ENCODE measurements at regions of chr2 and their contacts with region 1.

Region 1: GRCh38 chr2:64914735-64915509 is 74.3 kb upstream of the SLC1A4 start:
- DNase-seq: no peak
- ATAC-seq: peak; percentile 73
- H3K4me3 Mint-ChIP-seq: peak overlapping the region; percentile 71
- H3K27ac Mint-ChIP-seq: peak overlapping the region; percentile 94
- H3K4me1 Mint-ChIP-seq: peaks cover 68% of the 10 kb centered on the region
- H3K27me3 Mint-ChIP-seq: no peaks in the 10 kb centered on the region
- CTCF ChIP-seq: no peak

Region 2: DNA sequence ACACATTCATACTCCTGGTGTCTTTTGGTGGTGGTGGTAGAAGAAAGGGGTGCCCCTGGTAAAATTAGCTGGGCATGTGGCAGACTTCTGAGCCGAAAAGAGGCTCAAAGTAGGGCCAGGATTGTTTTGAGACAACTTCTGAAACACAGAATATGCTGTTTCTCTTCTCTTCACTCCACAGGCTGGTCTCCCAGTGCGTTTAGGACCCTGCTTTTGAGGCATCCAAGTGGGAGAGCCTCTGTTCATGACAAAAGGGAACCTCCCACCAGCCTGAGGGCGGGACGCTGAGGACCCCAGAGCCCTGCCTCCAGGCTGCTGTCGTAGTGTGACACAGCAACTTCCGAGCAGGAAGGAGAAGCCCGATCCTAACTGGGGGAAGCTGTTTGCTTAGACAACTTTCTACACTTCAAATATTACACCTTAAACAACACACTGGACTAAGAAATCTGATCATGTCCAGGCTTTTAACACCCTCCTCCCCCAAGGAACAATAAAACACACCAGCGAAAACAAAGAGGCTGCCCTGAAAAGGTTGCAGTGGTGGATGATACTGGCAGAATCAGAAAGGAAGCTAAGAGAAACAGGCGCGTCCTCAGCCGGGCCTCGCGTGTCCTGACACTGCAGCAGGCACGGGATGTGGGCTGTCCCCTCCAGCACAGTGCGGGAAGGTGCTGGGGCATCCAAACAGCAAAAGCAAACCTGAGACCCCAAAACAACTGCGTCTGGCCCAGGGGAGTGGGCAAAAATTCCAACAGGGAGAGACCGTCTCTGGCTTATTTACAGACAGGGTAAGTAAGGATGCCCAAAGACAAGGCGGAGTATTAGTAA is 270.5 kb before region 1 on chr2:
- CTCF ChIA-PET with region 1: interaction called, 4 read pairs
- POLR2A ChIA-PET with region 1: interaction called, 7 read pairs
- intact Hi-C with region 1: loop called (anchors 1 kb)
- DNase-seq: peak; percentile 48
- ATAC-seq: peak; percentile 45
- H3K4me3 Mint-ChIP-seq: peak overlapping the region; percentile 86
- H3K27ac Mint-ChIP-seq: peak overlapping the region; percentile 93
- H3K4me1 Mint-ChIP-seq: peaks cover 96% of the 10 kb centered on the region
- H3K27me3 Mint-ChIP-seq: no peaks in the 10 kb centered on the region
- CTCF ChIP-seq: no peak

Region 3: DNA sequence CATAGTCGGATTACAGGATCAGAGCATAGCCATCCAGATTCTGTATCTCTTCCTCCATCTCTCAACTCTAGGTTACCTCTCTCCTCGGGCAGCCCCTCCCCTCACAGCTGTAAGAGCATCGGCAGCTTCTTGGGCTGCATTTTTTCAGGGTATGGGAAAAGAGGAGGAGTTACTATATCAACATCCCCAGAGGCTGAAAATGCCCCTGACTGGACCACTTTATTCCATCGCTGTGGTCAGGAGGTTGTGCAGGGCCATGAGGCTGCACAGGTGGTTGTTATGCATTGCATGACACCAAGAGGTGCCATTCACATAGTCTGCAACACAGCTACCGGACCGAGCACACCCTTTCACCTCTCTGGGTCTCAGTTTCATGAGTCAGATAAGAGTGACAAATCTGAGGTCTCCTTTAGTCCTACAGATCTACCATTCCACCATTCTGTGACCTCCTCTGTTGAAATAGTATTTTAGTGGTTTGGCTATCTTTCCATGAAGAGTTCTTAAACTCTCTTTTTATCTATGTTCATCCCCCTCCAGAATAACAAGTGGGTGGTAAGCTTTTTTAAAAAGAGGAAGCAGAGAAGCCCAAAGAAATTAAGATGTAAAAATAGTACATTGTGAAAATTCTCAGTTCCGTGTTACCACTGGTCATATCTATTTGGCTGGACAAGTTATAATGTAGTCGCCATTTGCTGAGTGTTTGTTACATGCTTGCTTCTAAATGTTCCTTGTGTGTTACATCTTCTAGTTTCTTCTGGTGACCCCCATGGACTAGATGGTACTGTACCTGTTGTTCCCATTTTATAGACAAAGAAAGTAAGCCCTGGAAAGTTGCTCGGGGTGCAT is 17.7 kb after region 1 on chr2:
- CTCF ChIA-PET with region 1: interaction called, 45 read pairs
- POLR2A ChIA-PET with region 1: interaction called, 50 read pairs
- intact Hi-C with region 1: loop called (anchors 1 kb)
- DNase-seq: no peak
- ATAC-seq: peak; percentile 81
- H3K4me3 Mint-ChIP-seq: peak overlapping the region; percentile 90
- H3K27ac Mint-ChIP-seq: peak overlapping the region; percentile 93
- H3K4me1 Mint-ChIP-seq: peaks cover 97% of the 10 kb centered on the region
- H3K27me3 Mint-ChIP-seq: no peaks in the 10 kb centered on the region
- CTCF ChIP-seq: no peak

Region 4: DNA sequence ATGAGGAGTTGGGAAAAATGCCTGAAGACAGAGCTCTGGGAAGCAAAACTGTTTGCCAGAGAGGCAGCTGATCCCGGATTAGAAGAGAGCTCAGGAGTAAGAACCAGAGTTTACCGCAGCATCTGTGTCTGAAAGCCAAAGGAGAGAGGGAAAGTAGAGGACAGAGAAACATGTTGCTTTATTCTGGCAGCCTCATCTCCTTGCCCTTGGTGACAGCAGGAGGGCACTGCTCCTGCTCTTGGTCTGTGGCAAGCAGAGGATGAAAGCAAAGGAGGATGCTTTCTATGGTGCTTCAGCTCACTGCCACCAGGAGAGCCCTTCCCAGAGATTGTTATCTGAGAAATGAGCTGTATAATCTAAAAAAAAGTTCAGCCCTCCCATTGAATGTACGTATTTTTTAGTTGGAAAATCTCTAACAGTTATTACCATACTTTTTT is 82.0 kb after region 1 on chr2:
- CTCF ChIA-PET with region 1: interaction called, 14 read pairs
- POLR2A ChIA-PET with region 1: interaction called, 102 read pairs
- intact Hi-C with region 1: no loop called
- DNase-seq: no peak
- ATAC-seq: no peak
- H3K4me3 Mint-ChIP-seq: no peak overlapping the region
- H3K27ac Mint-ChIP-seq: no peak overlapping the region
- H3K4me1 Mint-ChIP-seq: peaks cover 6% of the 10 kb centered on the region
- H3K27me3 Mint-ChIP-seq: no peaks in the 10 kb centered on the region
- CTCF ChIP-seq: no peak

Region 5: GRCh38 chr2:65040400-65041261 is 125.7 kb after region 1 on chr2:
- CTCF ChIA-PET with region 1: interaction called, 186 read pairs
- POLR2A ChIA-PET with region 1: interaction called, 5 read pairs
- intact Hi-C with region 1: loop called (anchors 1 kb)
- DNase-seq: peak; percentile 59
- ATAC-seq: peak; percentile 99
- H3K4me3 Mint-ChIP-seq: no peak overlapping the region
- H3K27ac Mint-ChIP-seq: peak overlapping the region; percentile 20
- H3K4me1 Mint-ChIP-seq: peaks cover 11% of the 10 kb centered on the region
- H3K27me3 Mint-ChIP-seq: no peaks in the 10 kb centered on the region
- CTCF ChIP-seq: peak; percentile 55

Region 6: DNA sequence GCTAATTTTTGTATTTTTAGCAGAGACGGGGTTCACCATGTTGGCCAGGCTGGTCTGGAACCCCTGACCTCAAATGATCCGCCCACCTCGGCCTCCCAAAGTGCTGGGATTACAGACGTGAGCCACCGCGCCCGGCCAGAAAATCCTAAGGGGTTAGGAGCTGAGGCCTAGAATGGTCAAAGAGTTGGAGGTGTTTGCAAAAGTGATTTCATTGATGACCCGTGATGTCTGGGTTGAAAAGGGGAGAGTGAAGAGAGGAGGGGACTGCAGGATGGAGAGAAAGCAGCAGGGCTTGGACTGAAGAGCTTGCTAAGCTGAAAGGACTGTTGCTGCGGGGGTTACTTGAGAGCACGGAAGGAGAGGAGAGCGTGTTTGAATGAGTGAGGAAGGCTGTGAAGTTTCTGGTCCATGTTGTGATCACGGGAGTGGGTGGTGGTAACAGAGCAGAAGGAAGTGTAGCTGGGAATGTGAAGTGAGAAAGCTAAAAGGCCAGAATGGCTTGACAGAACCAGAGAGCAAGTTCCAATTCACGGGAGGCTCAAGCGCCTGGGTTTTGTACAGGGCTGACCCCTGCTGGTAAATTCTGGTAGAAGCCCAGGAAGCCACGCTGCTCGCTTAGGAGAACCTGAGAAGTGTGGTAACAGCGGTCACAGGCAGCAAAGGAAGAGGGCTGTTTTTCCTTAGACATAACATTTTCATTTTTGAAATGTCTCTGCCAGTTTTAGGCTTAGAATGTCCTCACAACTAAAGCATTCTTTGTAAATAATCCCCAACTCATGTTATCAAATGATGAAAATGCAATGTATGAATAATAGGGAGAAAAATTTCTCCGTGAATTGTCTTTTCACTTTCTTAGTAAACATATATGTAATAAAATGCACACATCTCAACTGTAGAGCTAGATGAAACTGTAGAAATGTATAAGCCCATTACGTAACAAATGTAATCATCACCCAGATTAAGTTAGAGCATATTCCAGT is 272.2 kb after region 1 on chr2:
- CTCF ChIA-PET with region 1: interaction called, 3 read pairs
- POLR2A ChIA-PET with region 1: no interaction called
- intact Hi-C with region 1: loop called (anchors 5 kb)
- DNase-seq: peak; percentile 38
- ATAC-seq: peak; percentile 91
- H3K4me3 Mint-ChIP-seq: no peak overlapping the region
- H3K27ac Mint-ChIP-seq: no peak overlapping the region
- H3K4me1 Mint-ChIP-seq: peaks cover 4% of the 10 kb centered on the region
- H3K27me3 Mint-ChIP-seq: peaks cover 11% of the 10 kb centered on the region
- CTCF ChIP-seq: no peak

Measured in activated B cell treated with CpG ODN at 0.5 μM for 24 hours (primary cell).